ENCODE measurements at regions of chr6 and their contacts with region 1.

Region 1: GRCh38 chr6:45714741-45715507 is 300.7 kb downstream of the CLIC5 start:
- DNase-seq: peak; percentile 89
- ATAC-seq: peak; percentile 92
- H3K4me3 ChIP-seq: no peak overlapping the region
- H3K27ac ChIP-seq: peak overlapping the region; percentile 62
- H3K4me1 ChIP-seq: peaks cover 34% of the 10 kb centered on the region
- H3K27me3 ChIP-seq: no peaks in the 10 kb centered on the region
- CTCF ChIP-seq: peak; percentile 94

Region 2: DNA sequence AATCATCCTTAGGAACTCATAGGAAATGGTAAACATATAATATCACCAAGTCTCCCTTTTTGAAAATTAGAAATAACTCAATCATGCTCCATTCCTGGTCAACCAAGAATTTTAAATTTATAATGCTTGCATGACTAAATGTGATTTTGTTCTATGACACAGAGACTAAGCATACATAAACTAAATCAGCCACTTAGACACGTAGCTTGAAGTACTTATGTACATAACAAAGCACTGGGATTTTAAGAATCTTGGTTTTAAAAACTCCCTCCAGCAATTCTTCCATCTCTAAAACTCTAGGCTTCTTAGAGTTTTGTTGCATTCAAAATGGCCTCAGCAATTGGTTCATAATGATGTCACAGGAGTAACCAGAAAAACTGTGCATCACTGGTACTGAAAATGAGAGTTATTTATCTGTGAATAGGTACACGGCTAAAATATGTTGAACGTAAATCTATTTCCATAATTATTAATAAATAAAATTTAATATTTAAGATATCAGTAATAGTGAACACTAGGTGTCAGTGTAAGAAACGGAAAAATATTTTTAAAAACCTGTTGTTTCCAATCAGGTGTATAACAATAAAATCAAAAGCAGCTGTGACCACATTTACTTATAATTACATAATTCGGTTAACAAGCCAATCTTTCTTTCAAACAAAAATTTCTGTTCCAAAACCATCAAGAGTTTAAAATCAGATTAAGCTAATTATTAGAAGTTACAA is 628.4 kb before region 1 on chr6:
- CTCF ChIA-PET with region 1: no interaction called
- POLR2A ChIA-PET with region 1: no interaction called
- intact Hi-C with region 1: loop called (anchors 5 kb)
- DNase-seq: peak; percentile 37
- ATAC-seq: no peak
- H3K4me3 ChIP-seq: no peak overlapping the region
- H3K27ac ChIP-seq: no peak overlapping the region
- H3K4me1 ChIP-seq: no peaks in the 10 kb centered on the region
- H3K27me3 ChIP-seq: no peaks in the 10 kb centered on the region
- CTCF ChIP-seq: 0 out of 2 replicates have a peak, but pooled peaks have one; percentile 19

Region 3: GRCh38 chr6:45229416-45229815 is 485.5 kb before region 1 on chr6:
- CTCF ChIA-PET with region 1: no interaction called
- POLR2A ChIA-PET with region 1: no interaction called
- intact Hi-C with region 1: no loop called
- DNase-seq: no peak
- ATAC-seq: no peak
- H3K4me3 ChIP-seq: no peak overlapping the region
- H3K27ac ChIP-seq: no peak overlapping the region
- H3K4me1 ChIP-seq: no peaks in the 10 kb centered on the region
- H3K27me3 ChIP-seq: no peaks in the 10 kb centered on the region
- CTCF ChIP-seq: no peak

Region 4: DNA sequence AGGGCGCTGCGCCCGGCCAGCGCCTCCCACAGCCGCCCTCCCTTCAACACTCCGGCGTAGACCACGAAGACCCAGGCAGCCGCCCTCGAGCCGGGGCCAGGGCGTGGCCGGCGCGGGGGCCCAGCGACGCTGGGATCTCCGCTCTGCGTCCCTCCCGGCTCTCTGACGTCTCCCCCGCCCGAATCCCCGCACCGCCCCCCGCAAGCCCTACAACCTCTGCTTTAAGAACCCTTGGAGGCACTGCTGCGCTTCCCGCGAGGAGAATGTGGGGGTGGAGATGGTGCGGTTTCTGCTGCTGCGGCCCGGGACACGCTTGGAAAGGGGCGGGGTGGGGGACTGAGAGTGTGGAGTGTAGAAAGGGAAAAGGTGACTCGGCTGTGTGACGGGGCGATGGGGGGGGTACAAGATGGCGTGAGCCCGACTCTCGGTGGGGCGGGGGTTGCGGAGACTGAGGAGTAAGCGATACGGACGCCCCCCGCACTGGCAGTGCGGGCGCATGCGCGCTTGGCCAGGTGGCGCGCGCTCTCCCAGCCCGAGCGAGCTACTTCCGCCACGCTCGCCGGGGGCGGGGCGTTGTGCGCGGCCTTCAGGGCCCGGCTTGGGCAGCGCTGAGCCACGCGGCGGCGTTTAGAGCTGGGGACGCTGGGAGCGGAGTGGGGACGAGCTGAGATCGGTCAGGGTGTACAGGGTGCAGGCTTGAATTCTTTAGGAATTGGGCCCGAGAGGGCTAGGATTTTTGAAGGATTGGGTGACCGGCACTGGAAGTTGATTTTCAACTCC is 337.2 kb before region 1 on chr6 and contains the start of gene SUPT3H:
- CTCF ChIA-PET with region 1: interaction called, 7 read pairs
- POLR2A ChIA-PET with region 1: interaction called, 3 read pairs
- intact Hi-C with region 1: loop called (anchors 2 kb)
- DNase-seq: peak; percentile 97
- ATAC-seq: peak; percentile 94
- H3K4me3 ChIP-seq: peak within 1 kb of the TSS; percentile 92
- H3K27ac ChIP-seq: peak within 1 kb of the TSS; percentile 90
- H3K4me1 ChIP-seq: peaks cover 19% of the 10 kb centered on the region
- H3K27me3 ChIP-seq: no peaks in the 10 kb centered on the region
- CTCF ChIP-seq: peak; percentile 31
- total RNA-seq, gene SUPT3H: 3.6 and 4.0 TPM in 2 replicates

Region 5: GRCh38 chr6:45436544-45437438 is 278.1 kb before region 1 on chr6:
- CTCF ChIA-PET with region 1: interaction called, 4 read pairs
- POLR2A ChIA-PET with region 1: no interaction called
- intact Hi-C with region 1: loop called (anchors 5 kb)
- DNase-seq: peak; percentile 65
- ATAC-seq: peak; percentile 57
- H3K4me3 ChIP-seq: peak overlapping the region; percentile 35
- H3K27ac ChIP-seq: peak overlapping the region; percentile 78
- H3K4me1 ChIP-seq: peaks cover 69% of the 10 kb centered on the region
- H3K27me3 ChIP-seq: no peaks in the 10 kb centered on the region
- CTCF ChIP-seq: no peak

Region 6: GRCh38 chr6:45608252-45608911 is 106.5 kb before region 1 on chr6:
- CTCF ChIA-PET with region 1: no interaction called
- POLR2A ChIA-PET with region 1: no interaction called
- intact Hi-C with region 1: loop called (anchors 1 kb)
- DNase-seq: peak; percentile 93
- ATAC-seq: peak; percentile 61
- H3K4me3 ChIP-seq: peak overlapping the region; percentile 44; the same call in 1 of the 2 replicates
- H3K27ac ChIP-seq: peak overlapping the region; percentile 99
- H3K4me1 ChIP-seq: peaks cover 42% of the 10 kb centered on the region
- H3K27me3 ChIP-seq: no peaks in the 10 kb centered on the region
- CTCF ChIP-seq: 0 out of 2 replicates have a peak, but pooled peaks have one; percentile 23

Region 7: GRCh38 chr6:45681860-45682511 is 32.9 kb before region 1 on chr6:
- CTCF ChIA-PET with region 1: no interaction called
- POLR2A ChIA-PET with region 1: no interaction called
- intact Hi-C with region 1: no loop called
- DNase-seq: peak; percentile 34
- ATAC-seq: peak; percentile 33
- H3K4me3 ChIP-seq: no peak overlapping the region
- H3K27ac ChIP-seq: peak overlapping the region; percentile 49
- H3K4me1 ChIP-seq: peaks cover 13% of the 10 kb centered on the region
- H3K27me3 ChIP-seq: no peaks in the 10 kb centered on the region
- CTCF ChIP-seq: no peak

Region 8: DNA sequence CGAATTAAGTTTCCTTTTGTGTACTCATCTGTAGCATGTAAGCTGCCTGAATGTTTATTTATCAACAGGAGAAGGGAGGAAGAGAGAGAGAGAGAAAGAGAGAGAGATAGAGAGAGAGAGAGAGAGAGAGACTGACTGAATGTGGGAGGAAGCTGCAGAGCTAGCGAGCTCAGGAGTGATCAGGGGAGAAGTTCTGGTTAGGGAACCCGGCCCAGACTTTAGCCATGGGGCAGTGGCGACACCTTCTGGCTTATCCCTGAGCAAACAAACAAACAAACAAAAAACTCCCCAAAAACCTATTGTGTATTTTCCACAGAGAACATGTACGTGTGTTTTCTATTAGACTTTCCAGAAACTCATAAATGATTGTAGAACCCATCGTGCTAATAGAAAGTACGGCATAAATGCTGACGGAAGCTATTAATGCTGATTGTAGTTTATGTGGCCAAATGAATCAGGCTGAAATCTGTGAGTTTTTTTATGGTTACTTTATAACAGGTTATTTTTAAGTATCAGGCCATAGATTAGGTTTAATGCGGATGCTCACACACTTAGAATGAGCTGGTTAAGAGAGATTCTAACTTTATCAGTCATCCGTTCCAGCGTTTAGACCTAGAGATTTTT is 207.9 kb after region 1 on chr6:
- CTCF ChIA-PET with region 1: interaction called, 9 read pairs
- POLR2A ChIA-PET with region 1: no interaction called
- intact Hi-C with region 1: loop called (anchors 2 kb)
- DNase-seq: peak; percentile 72
- ATAC-seq: peak; percentile 72
- H3K4me3 ChIP-seq: no peak overlapping the region; the same call in 1 of the 2 replicates
- H3K27ac ChIP-seq: no peak overlapping the region
- H3K4me1 ChIP-seq: peaks cover 33% of the 10 kb centered on the region
- H3K27me3 ChIP-seq: no peaks in the 10 kb centered on the region
- CTCF ChIP-seq: peak; percentile 91

Region 9: DNA sequence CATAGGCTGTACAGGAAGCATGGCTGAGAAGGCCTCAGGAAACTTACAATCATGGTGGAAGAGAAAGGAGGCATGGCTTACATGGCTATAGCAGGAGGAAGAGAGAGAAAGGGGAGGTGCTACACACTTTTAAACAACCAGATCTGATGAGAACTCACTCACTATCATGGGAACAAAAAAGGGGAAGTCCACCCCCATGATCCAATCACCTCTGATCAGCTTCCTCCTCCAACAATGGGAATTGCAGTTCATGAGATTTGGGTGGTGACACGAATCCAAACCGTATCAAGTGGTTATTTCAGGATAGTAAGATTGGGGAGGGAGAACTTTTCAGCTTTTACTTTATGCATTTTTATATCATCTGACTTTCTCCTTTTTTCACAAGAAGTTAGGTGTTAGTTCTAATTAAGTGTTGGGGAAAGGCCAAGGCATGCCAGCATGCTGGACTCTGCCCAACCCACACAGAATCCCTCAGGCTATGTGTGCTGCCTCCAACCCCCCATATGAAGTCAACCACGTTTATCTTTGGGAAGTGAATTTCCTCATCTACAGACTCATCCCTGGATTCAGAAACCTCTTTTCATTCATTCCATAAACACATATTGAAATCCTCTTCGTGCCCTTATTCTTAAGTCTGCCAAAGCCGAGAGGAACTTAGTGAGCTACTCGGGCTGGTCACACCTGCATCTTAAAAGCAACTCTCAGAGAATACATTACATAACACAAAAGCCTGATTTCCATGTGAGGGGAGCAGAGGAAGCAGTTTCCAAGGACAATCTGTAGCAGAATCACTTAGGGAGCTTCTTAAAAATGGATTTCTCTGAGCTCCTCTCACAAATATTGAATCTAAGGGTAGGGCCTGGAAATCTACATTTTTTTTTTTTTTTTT is 317.4 kb after region 1 on chr6:
- CTCF ChIA-PET with region 1: no interaction called
- POLR2A ChIA-PET with region 1: no interaction called
- intact Hi-C with region 1: no loop called
- DNase-seq: no peak
- ATAC-seq: no peak
- H3K4me3 ChIP-seq: no peak overlapping the region
- H3K27ac ChIP-seq: no peak overlapping the region
- H3K4me1 ChIP-seq: peaks cover 6% of the 10 kb centered on the region; the same call in 1 of the 2 replicates
- H3K27me3 ChIP-seq: peaks cover 45% of the 10 kb centered on the region
- CTCF ChIP-seq: no peak

Region 10: DNA sequence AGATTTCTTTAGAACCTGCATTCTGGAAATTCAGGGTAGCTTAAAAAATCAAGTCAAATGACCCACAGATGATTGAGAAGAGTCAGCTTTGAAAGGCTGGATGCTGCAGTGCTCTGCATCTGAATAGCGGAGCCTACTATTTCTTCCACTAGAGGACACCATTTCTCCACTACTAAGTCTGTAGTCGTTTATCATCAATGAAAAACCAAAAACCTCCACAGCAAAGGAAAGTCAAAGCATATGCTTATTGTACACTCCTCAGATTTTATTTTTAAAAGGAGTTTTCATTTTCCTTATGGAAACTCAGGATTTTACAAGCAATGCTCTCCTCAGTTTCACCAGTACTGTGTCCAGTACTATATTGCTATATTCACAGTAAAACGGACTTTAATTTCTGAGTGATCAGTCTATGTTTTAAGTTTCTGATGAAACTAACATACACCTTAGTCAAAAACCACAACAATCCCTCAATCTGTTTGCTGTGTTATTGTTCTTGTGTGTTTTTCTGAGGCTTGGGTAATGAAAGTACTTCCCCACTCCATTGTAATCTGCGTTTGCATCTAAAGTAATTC is 506.4 kb after region 1 on chr6:
- CTCF ChIA-PET with region 1: no interaction called
- POLR2A ChIA-PET with region 1: no interaction called
- intact Hi-C with region 1: no loop called
- DNase-seq: peak; percentile 70
- ATAC-seq: peak; percentile 69
- H3K4me3 ChIP-seq: no peak overlapping the region
- H3K27ac ChIP-seq: no peak overlapping the region
- H3K4me1 ChIP-seq: no peaks in the 10 kb centered on the region
- H3K27me3 ChIP-seq: peaks cover 50% of the 10 kb centered on the region
- CTCF ChIP-seq: peak; percentile 87

Measured in PC-3 (cell line).